Cardiac septum (tissue), 1 donor: ENCODE measurements at regions of chr3 and their contacts with region 1.

Region 1: DNA sequence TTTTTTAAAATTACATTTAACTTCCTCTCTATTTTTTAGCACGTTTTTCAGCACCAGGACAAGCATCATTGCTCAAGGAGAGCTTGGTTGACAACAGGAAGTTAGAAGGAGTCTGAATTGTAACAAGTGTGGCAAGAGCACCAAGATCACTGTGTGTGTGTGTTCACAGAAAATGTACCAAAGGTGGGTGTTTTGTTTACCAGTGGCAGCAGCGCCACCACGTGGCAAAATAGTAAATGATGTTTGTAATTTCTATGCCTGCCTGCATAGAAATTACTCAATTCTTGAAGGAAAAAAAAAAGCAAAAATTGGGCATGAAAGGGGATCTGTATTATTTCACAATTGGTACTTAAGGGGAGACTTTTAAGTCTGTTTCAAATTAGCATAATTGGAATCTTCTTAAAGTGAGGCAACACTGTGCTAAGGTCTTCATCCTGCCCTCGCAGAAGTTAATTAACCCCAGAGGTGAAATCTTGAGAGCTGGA is 7.4 kb upstream of the U2SURP start:
- DNase-seq: no peak

Region 2: DNA sequence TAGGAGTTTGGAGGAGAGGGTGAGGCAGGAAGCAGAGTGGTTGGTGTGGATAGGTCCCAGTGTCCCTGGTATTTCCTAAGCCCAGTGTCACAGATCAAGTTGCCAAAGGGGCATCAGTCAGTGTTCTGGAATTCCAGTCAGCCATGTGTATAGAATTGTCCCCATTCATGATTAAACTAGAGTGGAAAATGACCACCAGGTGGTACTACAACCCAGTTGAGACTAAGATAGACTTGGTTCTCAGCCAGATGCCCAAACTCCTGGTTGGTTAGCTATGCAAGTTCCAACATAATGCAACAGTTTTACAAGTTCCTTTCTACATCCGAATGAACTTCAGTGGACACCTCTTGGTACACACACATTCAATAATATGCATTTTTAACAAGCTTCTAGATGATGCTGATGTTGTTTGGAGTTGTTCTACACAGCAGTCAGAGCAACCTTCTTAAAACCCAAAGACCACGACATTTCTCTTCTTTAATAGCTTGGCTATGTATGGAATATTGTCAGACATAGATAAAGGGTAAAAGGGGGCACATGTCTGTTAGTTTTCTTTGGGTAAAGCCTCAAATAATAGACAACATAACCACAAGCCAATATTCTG is 407.1 kb before region 1 on chr3:
- intact Hi-C with region 1: loop called (anchors 5 kb)
- DNase-seq: no peak

Region 3: DNA sequence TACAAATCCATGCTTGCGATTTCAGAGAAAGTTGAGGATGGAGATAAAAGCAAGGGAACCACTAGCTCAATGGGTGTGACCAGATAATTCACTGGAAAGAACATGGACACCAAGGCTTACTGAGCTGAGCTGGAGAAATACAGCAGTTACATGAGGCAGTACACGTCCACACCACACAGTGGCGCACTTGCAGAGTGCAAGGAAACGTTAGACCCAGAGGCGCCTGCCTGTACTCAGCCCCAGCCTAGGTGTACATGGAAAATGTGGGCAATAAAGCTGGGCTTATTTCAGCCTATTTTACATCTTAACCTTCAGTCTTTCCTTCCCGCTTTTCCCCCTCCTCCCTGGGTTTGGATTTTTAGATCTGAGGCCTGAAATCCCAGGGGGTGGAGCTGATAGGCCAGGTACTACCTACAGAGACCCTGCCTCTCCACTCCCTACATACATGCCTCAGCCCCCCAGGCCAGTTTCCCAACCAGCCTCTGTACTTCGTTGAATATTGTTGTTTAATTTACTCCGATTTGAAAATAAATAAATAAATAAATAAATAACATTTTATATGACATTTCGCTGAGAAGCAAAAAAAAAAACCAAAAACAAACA is 165.2 kb before region 1 on chr3:
- intact Hi-C with region 1: loop called (anchors 2 kb)
- DNase-seq: peak; percentile 89

Region 4: DNA sequence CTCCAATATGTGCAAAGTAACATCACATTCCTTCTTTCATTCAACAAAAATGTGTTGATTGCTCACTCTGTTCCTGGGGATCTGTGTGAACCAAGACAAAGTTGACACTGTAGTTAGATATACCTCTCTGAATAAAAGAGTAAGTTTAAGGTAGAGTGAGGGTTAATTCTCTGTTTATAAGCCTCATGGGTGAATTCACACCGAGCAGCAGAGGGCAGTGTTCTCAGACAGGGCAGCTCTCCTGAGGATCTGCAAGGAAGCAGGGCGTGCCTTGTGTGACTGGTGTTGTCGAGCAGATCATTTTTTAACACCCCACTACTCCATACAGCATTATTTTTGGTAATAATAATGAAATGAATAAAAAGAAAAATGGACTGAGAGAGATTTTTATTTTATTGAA is 64.9 kb before region 1 on chr3:
- intact Hi-C with region 1: loop called (anchors 2 kb)
- DNase-seq: no peak